Calu3 (cell line): ENCODE measurements at regions of chr17 and their contacts with region 1.

Region 1: GRCh38 chr17:14688132-14688531 is 387.3 kb downstream of the HS3ST3B1 start:
- DNase-seq: no peak
- H3K4me3 Mint-ChIP-seq: no peak overlapping the region
- H3K27ac Mint-ChIP-seq: no peak overlapping the region
- H3K4me1 Mint-ChIP-seq: no peaks in the 10 kb centered on the region
- H3K27me3 Mint-ChIP-seq: no peaks in the 10 kb centered on the region
- CTCF ChIP-seq: no peak

Region 2: DNA sequence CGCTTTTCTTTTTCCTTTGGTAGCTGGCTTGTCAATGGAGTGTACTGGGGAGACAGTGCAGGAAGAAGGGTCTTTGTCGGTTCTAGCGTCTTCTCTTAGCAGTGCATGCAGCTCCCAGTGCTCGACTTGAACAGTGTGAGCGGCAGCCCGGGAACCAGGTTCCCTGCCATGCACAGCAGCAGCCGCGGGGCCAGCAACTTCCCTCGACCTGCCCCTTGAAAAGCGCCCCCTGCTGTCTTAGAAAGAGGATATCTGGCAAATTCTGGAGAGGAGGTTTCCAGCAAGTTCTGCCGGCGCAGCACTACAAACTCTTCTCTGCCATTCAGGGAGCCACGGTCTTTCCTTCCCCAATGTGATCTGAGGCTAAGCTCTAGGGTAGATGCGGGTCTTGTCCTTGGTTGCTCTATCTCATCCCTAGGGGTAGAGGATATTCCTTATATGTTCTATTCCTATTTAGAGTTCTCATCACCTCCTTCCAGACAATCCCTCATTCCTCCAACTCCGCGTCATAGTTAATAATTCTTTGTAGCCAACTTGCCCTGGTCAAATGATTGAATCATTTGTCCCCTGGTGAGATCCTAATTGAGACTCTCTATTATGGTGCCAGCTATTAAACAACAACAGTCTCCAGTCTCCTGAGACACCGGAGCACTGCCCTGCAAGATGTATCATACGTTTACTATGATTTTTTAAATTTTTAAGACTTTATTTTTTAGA is 125.7 kb after region 1 on chr17:
- CTCF ChIA-PET with region 1: no interaction called
- intact Hi-C with region 1: no loop called
- DNase-seq: no peak
- H3K4me3 Mint-ChIP-seq: no peak overlapping the region
- H3K27ac Mint-ChIP-seq: no peak overlapping the region
- H3K4me1 Mint-ChIP-seq: no peaks in the 10 kb centered on the region
- H3K27me3 Mint-ChIP-seq: no peaks in the 10 kb centered on the region
- CTCF ChIP-seq: no peak

Region 3: DNA sequence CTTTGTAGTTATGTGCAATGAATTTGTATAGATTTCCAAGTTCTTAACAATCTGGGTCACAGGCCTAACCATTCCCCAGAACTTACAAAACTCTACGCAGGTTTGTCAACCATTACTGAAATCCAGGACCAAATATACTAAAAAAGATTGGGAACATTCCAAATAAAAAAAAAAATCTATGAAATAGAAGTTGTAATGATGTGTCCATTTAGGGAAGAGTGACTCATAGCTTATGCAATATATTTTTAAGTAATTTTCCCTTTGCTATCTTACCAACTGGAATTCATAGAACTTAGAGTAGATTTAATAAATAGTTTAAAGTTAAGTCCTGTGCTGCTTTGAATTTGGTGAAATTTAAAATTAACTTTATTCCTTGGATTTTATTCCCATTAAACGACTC is 183.8 kb after region 1 on chr17:
- CTCF ChIA-PET with region 1: no interaction called
- intact Hi-C with region 1: loop called (anchors 10 kb)
- DNase-seq: no peak
- H3K4me3 Mint-ChIP-seq: no peak overlapping the region
- H3K27ac Mint-ChIP-seq: no peak overlapping the region
- H3K4me1 Mint-ChIP-seq: no peaks in the 10 kb centered on the region
- H3K27me3 Mint-ChIP-seq: no peaks in the 10 kb centered on the region
- CTCF ChIP-seq: no peak